Left lung (tissue), 14 donors: ENCODE measurements at regions of chr13 and their contacts with region 1.

Region 1: GRCh38 chr13:28792992-28793391 is 27.1 kb upstream of the MTUS2 start:
- DNase-seq: no peak
- ATAC-seq: peak; percentile 44
- H3K4me3 ChIP-seq: no peak overlapping the region
- H3K27ac ChIP-seq: no peak overlapping the region
- H3K4me1 ChIP-seq: peaks cover 0 to 7% of the 10 kb centered on the region in 2 donors
- H3K27me3 ChIP-seq: peaks cover 0 to 46% of the 10 kb centered on the region in 2 donors
- CTCF ChIP-seq: no peak

Region 2: GRCh38 chr13:28324181-28324789 is 468.7 kb before region 1 on chr13:
- intact Hi-C with region 1: loop called in 1 of 2 experiments (anchors 10 kb)
- DNase-seq: peak in 2 of 4 donors; percentile 47 to 64
- ATAC-seq: peak; percentile 96
- H3K4me3 ChIP-seq: no peak overlapping the region
- H3K27ac ChIP-seq: no peak overlapping the region
- H3K4me1 ChIP-seq: peaks cover 2 to 22% of the 10 kb centered on the region in 2 donors
- H3K27me3 ChIP-seq: no peaks in the 10 kb centered on the region
- CTCF ChIP-seq: peak; percentile 54 to 79

Region 3: GRCh38 chr13:28679628-28680027 is 113.4 kb before region 1 on chr13:
- intact Hi-C with region 1: loop called in 1 of 2 experiments (anchors 10 kb)
- DNase-seq: peak in 1 of 4 donors; percentile 2
- ATAC-seq: peak; percentile 62
- H3K4me3 ChIP-seq: no peak overlapping the region
- H3K27ac ChIP-seq: no peak overlapping the region
- H3K4me1 ChIP-seq: no peaks in the 10 kb centered on the region
- H3K27me3 ChIP-seq: no peaks in the 10 kb centered on the region
- CTCF ChIP-seq: no peak